ENCODE measurements at regions of chr6 and their contacts with region 1.

Region 1: DNA sequence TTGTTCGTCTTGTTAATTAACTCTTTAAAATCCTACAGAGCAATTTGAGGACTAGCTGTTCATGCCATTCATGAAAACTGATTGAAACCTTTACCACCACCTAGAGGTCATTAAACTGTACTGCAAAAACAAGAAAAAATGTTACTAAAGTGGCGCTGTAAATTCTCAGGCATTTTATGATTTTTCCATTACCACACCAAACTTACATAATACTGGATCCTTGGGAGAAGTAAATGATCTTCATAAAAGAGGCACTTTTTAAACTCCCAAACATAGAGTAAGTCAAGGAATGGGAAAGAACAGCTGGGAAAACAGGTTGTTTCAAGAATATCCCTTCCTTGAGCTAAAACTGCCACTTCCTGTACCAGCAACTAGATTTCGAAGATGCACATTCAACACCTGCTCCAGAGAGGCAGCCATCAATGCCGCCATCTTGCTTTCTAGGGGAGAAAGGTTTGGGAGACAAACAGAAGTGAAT is 54.3 kb downstream of the MYLIP start:
- DNase-seq: peak in 1 of 35 experiments; percentile 59
- ATAC-seq: no peak
- H3K4me3 ChIP-seq: no peak overlapping the region
- H3K4me3 Mint-ChIP-seq: no peak overlapping the region
- H3K27ac ChIP-seq: no peak overlapping the region
- H3K27ac Mint-ChIP-seq: peak overlapping the region in 1 of 2 donors; percentile 22
- H3K4me1 ChIP-seq: peaks cover 4 to 31% of the 10 kb centered on the region in 2 experiments
- H3K4me1 Mint-ChIP-seq: peaks cover 25 to 40% (median 33%) of the 10 kb centered on the region in 3 donors
- H3K27me3 ChIP-seq: no peaks in the 10 kb centered on the region
- H3K27me3 Mint-ChIP-seq: peaks cover 0 to under 1% of the 10 kb centered on the region in 2 donors

Region 2: DNA sequence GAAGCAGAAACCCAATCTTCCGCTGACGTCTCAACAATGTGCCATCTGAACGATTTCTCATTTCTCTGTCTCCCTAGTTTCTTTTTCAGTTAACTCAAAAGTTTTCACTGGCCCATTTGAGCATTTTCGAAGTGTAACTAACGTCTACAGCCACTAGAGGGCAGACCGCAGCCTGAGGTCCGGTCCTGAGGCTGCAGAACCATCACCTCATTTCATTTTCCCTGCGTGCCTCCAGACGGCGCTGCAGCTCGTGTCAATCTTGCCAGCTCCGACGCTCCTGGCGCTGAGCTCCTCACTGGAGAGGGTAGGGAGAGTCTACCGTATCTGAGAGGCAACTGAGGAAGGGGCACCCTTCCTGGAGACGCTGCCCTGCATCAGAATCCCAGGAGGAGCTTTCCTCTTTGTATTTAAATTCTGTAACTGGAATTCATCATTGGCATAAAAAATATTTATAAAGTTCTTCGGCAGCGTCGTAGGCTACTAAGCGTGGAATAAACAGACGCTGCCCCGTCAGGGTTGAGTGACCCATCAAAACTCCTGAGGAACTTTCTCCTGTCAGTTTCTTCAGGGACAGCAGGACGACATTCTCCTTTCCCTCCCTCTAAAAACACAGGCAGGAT is 491.9 kb before region 1 on chr6:
- CTCF ChIA-PET with region 1: interaction called, 19 to 43 read pairs
- POLR2A ChIA-PET with region 1: interaction called in 1 of 2 experiments, 3 read pairs
- DNase-seq: peak; percentile 40 to 92 (median 73)
- ATAC-seq: peak; percentile 96 to 100 (median 97)
- H3K4me3 ChIP-seq: no peak overlapping the region
- H3K4me3 Mint-ChIP-seq: no peak overlapping the region
- H3K27ac ChIP-seq: no peak overlapping the region
- H3K27ac Mint-ChIP-seq: peak overlapping the region in 1 of 2 donors; percentile 25
- H3K4me1 ChIP-seq: peaks cover 0 to 4% of the 10 kb centered on the region in 2 experiments
- H3K4me1 Mint-ChIP-seq: peaks cover 6 to 8% (median 8%) of the 10 kb centered on the region in 3 donors
- H3K27me3 ChIP-seq: peaks cover 0 to 9% of the 10 kb centered on the region in 2 experiments
- H3K27me3 Mint-ChIP-seq: peaks cover 0 to 4% of the 10 kb centered on the region in 2 donors

Region 3: DNA sequence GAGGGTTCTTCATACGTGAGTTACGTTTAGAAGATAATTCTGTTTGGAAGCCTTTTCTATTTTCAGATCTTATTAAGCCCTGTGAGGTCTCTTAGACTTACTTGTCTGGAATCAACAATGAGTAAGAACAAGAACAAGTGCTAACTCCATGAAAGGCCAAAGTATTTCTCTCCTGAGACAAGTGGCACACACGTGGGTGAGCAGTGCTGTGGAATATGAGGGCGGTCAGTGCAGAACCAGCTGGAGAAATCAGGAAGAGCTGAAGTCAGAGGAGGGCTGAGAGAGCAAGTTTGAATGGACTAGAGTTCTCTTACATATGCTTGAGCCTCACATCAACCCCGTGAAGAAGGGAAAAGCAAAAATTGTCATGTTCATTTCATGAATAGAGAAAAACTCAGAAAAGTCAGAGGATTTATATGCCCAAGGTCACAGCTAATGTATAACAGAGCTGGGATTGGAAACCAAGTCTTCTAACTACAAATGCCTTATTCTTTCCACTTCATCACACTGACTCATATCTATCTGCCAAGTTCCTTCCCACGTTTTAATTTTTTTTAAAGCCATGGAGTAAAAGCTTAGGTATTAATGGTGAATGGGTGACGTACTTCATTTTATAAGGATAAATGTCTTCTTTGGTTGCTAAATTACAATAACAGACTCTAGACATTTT is 319.1 kb before region 1 on chr6:
- CTCF ChIA-PET with region 1: interaction called in 1 of 2 experiments, 11 read pairs
- POLR2A ChIA-PET with region 1: no interaction called
- DNase-seq: no peak
- ATAC-seq: no peak
- H3K4me3 ChIP-seq: no peak overlapping the region
- H3K4me3 Mint-ChIP-seq: no peak overlapping the region
- H3K27ac ChIP-seq: no peak overlapping the region
- H3K27ac Mint-ChIP-seq: no peak overlapping the region
- H3K4me1 ChIP-seq: no peaks in the 10 kb centered on the region
- H3K4me1 Mint-ChIP-seq: no peaks in the 10 kb centered on the region
- H3K27me3 ChIP-seq: no peaks in the 10 kb centered on the region
- H3K27me3 Mint-ChIP-seq: peaks cover 6 to 15% of the 10 kb centered on the region in 2 donors

Region 4: GRCh38 chr6:16136621-16137450 is 46.4 kb before region 1 on chr6:
- CTCF ChIA-PET with region 1: interaction called in 1 of 2 experiments, 22 read pairs
- POLR2A ChIA-PET with region 1: interaction called, 4 to 25 read pairs
- DNase-seq: peak in 9 of 35 experiments; percentile 12 to 52 (median 20)
- ATAC-seq: peak; percentile 43 to 84 (median 75)
- H3K4me3 ChIP-seq: no peak overlapping the region
- H3K4me3 Mint-ChIP-seq: peak overlapping the region; percentile 59 to 94 (median 68)
- H3K27ac ChIP-seq: peak overlapping the region; percentile 36
- H3K27ac Mint-ChIP-seq: peak overlapping the region; percentile 80 to 83
- H3K4me1 ChIP-seq: peaks cover 41 to 49% of the 10 kb centered on the region in 2 experiments
- H3K4me1 Mint-ChIP-seq: peaks cover 93 to 95% (median 94%) of the 10 kb centered on the region in 3 donors
- H3K27me3 ChIP-seq: no peaks in the 10 kb centered on the region
- H3K27me3 Mint-ChIP-seq: no peaks in the 10 kb centered on the region

Region 5: DNA sequence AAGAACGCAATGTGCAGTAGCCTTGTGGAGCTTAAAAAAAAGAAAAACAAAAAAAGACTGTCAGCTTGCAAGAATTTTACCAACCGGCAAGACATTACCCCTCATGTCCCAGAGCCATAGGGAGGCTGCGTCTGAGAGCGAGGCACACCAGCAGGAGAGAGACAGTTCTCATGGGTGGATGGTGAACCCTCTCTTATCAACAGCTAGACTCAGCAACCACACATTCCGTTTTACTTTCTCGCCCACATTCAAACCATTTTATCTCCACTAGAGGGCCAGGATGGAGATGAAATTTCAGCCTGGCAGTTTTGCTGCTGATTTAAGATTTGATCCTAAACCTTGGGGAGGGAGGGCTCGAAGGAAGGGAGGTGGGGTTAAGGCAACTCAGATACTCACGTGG is 331.0 kb after region 1 on chr6:
- CTCF ChIA-PET with region 1: no interaction called
- POLR2A ChIA-PET with region 1: no interaction called
- DNase-seq: peak in 13 of 35 experiments; percentile 3 to 66 (median 15)
- ATAC-seq: peak; percentile 32 to 50 (median 40)
- H3K4me3 ChIP-seq: no peak overlapping the region
- H3K4me3 Mint-ChIP-seq: peak overlapping the region in 1 of 3 donors; percentile 46
- H3K27ac ChIP-seq: no peak overlapping the region
- H3K27ac Mint-ChIP-seq: peak overlapping the region; percentile 37 to 60
- H3K4me1 ChIP-seq: peaks cover 29 to 38% of the 10 kb centered on the region in 2 experiments
- H3K4me1 Mint-ChIP-seq: peaks cover 60 to 69% (median 68%) of the 10 kb centered on the region in 3 donors
- H3K27me3 ChIP-seq: no peaks in the 10 kb centered on the region
- H3K27me3 Mint-ChIP-seq: no peaks in the 10 kb centered on the region

Measured in T-cell (primary cell).